HEK293 (cell line): ENCODE measurements at regions of chr15 and their contacts with region 1.

Region 1: GRCh38 chr15:96860742-96861141 is 530.2 kb downstream of the NR2F2 start:
- H3K4me3 ChIP-seq: no peak overlapping the region
- H3K27ac ChIP-seq: no peak overlapping the region
- H3K4me1 ChIP-seq: no peaks in the 10 kb centered on the region
- CTCF ChIP-seq: no peak

Region 2: DNA sequence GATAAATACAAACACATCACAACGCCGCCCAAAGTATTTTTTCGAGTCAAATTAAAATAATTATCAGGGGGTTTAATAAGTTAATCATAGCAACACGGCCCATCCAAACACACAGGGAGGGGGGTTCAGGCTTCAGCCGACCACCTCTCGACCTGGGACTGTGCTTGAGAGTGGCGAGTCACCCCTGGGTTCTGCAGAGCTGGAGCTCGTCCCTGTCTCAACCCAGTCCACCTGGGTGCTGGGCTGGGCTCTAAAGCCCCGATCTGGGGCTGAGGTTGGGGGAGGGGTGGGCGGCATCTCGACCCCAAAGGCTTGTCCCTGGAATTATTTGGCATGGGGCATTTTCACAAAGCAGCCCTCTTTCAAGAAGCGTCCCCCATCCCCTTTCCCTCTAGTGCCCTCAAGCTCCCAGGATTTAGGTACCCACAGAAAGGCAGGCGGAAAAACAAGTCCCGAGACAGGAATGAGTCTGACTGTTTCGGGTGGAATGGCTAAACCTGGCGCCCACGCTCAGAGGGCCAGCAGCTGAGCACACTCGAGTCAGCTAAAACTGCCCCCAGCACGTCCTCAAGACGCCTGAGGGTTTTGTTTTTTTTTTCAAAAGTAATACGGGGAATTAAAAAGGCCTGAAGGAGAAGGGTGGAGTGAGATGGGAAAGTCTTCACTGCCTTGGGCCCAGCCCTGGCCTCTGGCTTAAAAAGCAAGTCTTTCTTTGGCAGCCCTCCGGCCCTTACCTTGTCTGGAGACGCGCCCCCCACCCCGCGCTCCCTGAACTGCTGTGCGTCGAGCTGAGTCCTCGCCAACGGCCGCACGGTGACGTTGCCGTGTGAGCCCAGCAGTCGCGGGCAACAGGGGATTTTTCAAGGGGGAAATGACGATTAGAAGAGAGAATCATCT is 497.7 kb before region 1 on chr15:
- CTCF ChIA-PET with region 1: interaction called, 10 read pairs
- POLR2A ChIA-PET with region 1: no interaction called
- H3K4me3 ChIP-seq: no peak overlapping the region
- H3K27ac ChIP-seq: no peak overlapping the region
- H3K4me1 ChIP-seq: peaks cover 2% of the 10 kb centered on the region; the same call in 1 of the 2 replicates
- CTCF ChIP-seq: no peak

Region 3: DNA sequence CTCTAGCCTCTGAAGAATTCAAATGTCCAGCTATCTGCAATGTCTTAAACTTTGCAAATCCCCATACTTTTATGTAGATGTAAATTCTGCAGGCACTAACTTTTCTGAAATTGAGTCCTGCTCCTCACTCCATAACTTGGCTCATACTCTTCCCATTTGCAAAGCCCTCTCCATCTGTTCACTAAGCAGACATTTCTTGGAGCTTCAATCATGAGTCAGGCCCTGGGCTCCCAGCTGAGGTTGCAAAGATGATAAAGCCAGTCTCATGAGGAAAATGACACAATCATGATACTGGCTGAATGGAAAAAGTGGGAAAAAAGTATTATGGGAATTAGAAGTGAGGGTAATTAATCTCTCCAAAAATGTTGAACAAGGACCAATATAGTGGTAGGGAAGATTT is 22.7 kb before region 1 on chr15:
- CTCF ChIA-PET with region 1: no interaction called
- POLR2A ChIA-PET with region 1: no interaction called
- H3K4me3 ChIP-seq: no peak overlapping the region
- H3K27ac ChIP-seq: no peak overlapping the region
- H3K4me1 ChIP-seq: no peaks in the 10 kb centered on the region
- CTCF ChIP-seq: no peak

Region 4: GRCh38 chr15:97189162-97189780 is 328.5 kb after region 1 on chr15:
- CTCF ChIA-PET with region 1: no interaction called
- POLR2A ChIA-PET with region 1: no interaction called
- H3K4me3 ChIP-seq: no peak overlapping the region
- H3K27ac ChIP-seq: no peak overlapping the region
- H3K4me1 ChIP-seq: no peaks in the 10 kb centered on the region
- CTCF ChIP-seq: no peak